ENCODE measurements at regions of chr6 and their contacts with region 1.

Region 1: DNA sequence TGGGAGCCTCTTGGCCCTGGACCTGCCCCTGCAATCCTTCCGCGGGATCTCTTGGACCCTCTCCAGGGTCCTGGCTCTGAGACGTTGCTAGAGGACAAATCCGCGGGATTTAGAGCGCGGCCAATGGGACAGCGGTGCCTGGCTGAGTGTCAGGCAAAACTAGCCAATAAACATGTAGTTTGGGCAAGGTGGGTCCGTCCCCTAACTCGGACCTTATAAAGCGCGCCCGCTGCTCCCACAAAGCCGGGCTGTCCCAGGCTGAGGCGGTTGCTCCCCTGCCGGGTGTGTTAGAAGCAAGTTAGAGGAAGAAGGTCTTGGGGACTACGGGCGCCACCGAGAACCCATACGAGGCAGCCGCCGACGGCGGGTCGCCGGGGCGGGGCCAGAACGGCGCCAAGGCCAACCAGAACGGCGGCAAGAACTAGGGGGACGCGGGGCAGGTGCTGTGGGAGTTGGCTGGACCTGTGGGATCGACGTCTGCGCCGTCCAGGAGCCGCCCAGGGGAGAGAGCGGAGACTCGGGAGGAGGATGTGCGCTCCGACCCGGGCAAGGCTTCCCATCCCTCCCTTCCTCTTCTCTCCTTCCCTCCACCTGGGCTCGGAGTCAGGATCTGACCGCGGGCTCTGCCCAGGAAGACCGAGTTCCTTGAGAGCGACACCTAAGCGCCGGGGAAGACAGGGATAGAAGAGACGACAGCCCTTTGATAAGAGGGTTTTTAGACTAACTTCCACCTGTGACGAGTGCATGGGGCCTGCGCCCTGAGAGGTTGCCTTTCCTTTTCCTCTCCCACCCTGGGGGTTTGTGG is 6.5 kb upstream of the TMEM14A start:
- DNase-seq: peak; percentile 97
- H3K4me3 ChIP-seq: peak overlapping the region; percentile 74
- CTCF ChIP-seq: no peak

Region 2: DNA sequence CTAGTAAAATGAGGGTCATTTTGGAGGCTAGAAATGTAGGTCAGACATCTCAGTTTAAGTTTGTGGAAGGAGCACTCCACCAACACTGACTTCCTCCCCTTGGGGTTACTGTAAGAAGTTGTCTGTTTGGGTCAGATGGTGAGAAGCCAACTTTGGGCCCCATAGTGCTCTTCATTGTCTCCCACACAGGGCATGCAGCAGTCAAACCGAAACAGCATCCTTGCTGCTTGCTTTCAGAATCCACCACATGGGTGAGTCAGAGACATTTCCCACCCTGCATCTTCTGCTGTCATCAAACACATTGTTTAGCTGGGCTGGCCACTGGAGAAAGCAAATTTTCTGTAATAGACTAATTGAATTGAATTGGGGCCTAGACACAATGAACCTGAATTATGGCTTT is 436.9 kb before region 1 on chr6:
- in situ Hi-C with region 1: no loop called
- DNase-seq: no peak
- H3K4me3 ChIP-seq: no peak overlapping the region
- CTCF ChIP-seq: no peak

Region 3: DNA sequence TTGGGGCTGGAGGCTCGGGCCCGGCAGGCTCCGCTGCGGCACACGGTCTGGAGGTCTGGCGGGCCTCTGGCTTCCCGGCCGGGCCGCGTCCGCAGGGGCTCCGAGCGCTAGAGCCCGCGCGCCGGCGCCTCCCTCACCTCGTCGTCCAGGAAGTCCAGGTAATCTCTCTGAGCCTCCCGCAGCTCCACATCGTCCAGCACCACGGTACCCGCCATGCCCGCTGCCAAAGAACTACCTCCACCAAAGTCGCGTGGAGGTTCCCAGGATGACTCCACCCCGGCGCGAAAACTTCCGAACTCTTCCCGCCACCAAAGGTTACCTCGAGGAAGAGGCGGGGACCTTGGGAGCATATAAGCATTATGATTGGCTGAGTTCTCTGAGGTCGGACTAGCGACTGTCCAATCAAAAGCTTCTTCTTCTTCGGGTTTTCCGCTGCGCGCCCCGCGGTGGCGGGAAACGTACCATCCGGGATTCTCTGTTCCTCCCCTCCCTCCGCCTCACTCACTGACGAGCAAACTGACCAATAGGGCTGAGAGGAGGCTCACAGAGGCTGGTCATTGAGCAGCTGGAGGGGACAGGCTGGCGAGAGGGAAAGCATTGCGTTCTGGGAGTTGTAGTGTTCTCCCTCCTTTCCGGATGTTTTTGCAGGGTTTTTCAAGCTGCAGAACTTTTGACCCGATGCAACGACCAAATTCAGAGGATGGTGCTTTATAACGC is 379.8 kb before region 1 on chr6 and contains the start of gene MCM3:
- in situ Hi-C with region 1: loop called (anchors 25 kb)
- DNase-seq: peak; percentile 99
- H3K4me3 ChIP-seq: peak within 1 kb of the TSS; percentile 75
- CTCF ChIP-seq: no peak

Measured in astrocyte of the spinal cord (primary cell).